Caco-2 (cell line): ENCODE measurements at regions of chr2 and their contacts with region 1.

Region 1: DNA sequence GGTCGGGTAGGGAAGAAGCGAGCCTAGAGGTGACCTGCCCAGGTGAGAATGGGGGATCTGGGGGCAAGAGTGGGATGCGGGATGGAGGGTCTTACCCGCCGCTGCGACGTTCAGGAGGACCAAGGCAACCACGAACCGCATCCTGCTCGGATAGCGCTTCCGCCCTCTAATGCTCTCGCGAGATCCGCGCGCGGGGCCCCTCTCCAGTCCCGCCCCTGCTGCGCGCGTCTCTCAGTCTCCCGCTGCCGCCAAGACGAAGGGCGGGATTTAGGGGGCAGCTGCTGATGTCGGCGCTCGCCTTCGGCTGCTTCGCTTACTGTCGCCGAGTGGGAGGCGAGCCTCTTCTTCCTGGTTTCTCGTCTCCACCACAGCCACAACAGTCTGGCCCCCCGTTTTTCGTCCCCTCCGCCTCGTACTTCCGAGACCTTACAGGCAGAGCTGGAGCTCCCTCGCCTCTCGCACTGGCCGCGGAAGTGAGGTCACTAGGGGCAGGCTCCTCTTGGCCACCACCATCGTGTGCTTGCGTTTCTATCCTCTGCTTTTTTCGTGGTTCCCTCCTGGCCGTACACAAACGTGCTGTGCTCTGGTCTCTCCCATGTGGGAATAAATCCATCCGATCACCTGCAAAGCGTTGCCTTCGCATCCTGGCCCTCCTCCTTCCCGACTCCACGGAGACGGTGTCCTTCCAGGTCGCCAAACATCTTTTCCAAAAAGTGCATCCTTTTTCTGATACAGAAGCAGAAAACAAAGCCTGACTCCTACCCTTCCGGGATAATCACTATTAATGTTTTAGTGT is at the start of gene TGOLN2:
- DNase-seq: peak; percentile 91 to 94
- H3K4me3 ChIP-seq: peak within 1 kb of the TSS; percentile 93
- H3K4me3 Mint-ChIP-seq: peak within 1 kb of the TSS; percentile 86
- H3K27ac Mint-ChIP-seq: peak within 1 kb of the TSS; percentile 97
- H3K4me1 ChIP-seq: peaks cover 25% of the 10 kb centered on the region
- H3K4me1 Mint-ChIP-seq: peaks cover 22% of the 10 kb centered on the region
- H3K27me3 ChIP-seq: no peaks in the 10 kb centered on the region
- H3K27me3 Mint-ChIP-seq: no peaks in the 10 kb centered on the region
- CTCF ChIP-seq: peak in 1 of 2 experiments; percentile 14
- total RNA-seq, gene TGOLN2: 109 and 119 TPM in 2 replicates

Region 2: GRCh38 chr2:85255813-85256594 is 72.0 kb before region 1 on chr2:
- CTCF ChIA-PET with region 1: no interaction called
- POLR2A ChIA-PET with region 1: no interaction called
- intact Hi-C with region 1: loop called (anchors 2 kb)
- DNase-seq: peak; percentile 92 to 95
- H3K4me3 ChIP-seq: peak overlapping the region; percentile 29
- H3K4me3 Mint-ChIP-seq: peak overlapping the region; percentile 83
- H3K27ac Mint-ChIP-seq: peak overlapping the region; percentile 97
- H3K4me1 ChIP-seq: peaks cover 78% of the 10 kb centered on the region
- H3K4me1 Mint-ChIP-seq: peaks cover 80% of the 10 kb centered on the region
- H3K27me3 ChIP-seq: no peaks in the 10 kb centered on the region
- H3K27me3 Mint-ChIP-seq: no peaks in the 10 kb centered on the region
- CTCF ChIP-seq: no peak

Region 3: GRCh38 chr2:85308896-85309555 is 19.0 kb before region 1 on chr2:
- CTCF ChIA-PET with region 1: no interaction called
- POLR2A ChIA-PET with region 1: interaction called, 16 read pairs
- intact Hi-C with region 1: no loop called
- DNase-seq: no peak
- H3K4me3 ChIP-seq: no peak overlapping the region
- H3K4me3 Mint-ChIP-seq: no peak overlapping the region
- H3K27ac Mint-ChIP-seq: peak overlapping the region; percentile 6
- H3K4me1 ChIP-seq: peaks cover 12% of the 10 kb centered on the region
- H3K4me1 Mint-ChIP-seq: peaks cover 13% of the 10 kb centered on the region
- H3K27me3 ChIP-seq: no peaks in the 10 kb centered on the region
- H3K27me3 Mint-ChIP-seq: no peaks in the 10 kb centered on the region
- CTCF ChIP-seq: no peak

Region 4: GRCh38 chr2:85344356-85344954 is 16.4 kb after region 1 on chr2:
- CTCF ChIA-PET with region 1: no interaction called
- POLR2A ChIA-PET with region 1: no interaction called
- intact Hi-C with region 1: no loop called
- DNase-seq: no peak
- H3K4me3 ChIP-seq: no peak overlapping the region
- H3K4me3 Mint-ChIP-seq: no peak overlapping the region
- H3K27ac Mint-ChIP-seq: no peak overlapping the region
- H3K4me1 ChIP-seq: peaks cover 14% of the 10 kb centered on the region
- H3K4me1 Mint-ChIP-seq: peaks cover 13% of the 10 kb centered on the region
- H3K27me3 ChIP-seq: no peaks in the 10 kb centered on the region
- H3K27me3 Mint-ChIP-seq: no peaks in the 10 kb centered on the region
- CTCF ChIP-seq: no peak

Region 5: GRCh38 chr2:85826990-85827878 is 499.2 kb after region 1 on chr2:
- CTCF ChIA-PET with region 1: no interaction called
- POLR2A ChIA-PET with region 1: no interaction called
- intact Hi-C with region 1: no loop called
- DNase-seq: peak; percentile 64 to 82
- H3K4me3 ChIP-seq: no peak overlapping the region
- H3K4me3 Mint-ChIP-seq: peak overlapping the region; percentile 3
- H3K27ac Mint-ChIP-seq: no peak overlapping the region
- H3K4me1 ChIP-seq: no peaks in the 10 kb centered on the region
- H3K4me1 Mint-ChIP-seq: peaks cover 5% of the 10 kb centered on the region
- H3K27me3 ChIP-seq: no peaks in the 10 kb centered on the region
- H3K27me3 Mint-ChIP-seq: peaks cover 3% of the 10 kb centered on the region
- CTCF ChIP-seq: peak; percentile 87 to 91